ENCODE measurements at regions of chr2 and their contacts with region 1.

Region 1: GRCh38 chr2:19140596-19141219 is 217.7 kb downstream of the OSR1 start:
- DNase-seq: peak; percentile 55
- H3K4me3 ChIP-seq: no peak overlapping the region
- H3K27me3 ChIP-seq: no peaks in the 10 kb centered on the region
- CTCF ChIP-seq: no peak

Region 2: DNA sequence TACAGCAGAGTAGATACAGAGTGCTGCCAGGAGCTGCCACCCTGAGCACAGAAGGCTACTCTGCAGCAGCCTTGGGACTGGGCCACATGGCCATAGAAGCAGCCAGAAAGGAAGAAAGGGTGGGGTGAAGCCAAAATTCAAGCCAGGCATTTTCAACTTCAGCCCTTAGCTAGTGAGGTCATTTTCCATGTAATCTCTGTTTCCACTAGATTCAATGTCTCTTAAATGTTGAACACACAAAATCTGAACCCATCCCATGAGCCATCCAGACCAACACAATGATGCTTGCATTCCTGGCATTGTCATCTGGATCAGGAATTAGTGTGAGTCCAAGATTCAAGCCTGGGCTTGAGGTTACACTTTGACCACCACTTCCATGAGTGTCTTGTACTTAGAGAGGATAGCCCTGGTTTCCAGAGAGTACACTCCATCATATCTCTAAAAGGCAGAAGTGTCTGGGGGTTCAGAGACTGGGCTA is 25.9 kb before region 1 on chr2:
- CTCF ChIA-PET with region 1: no interaction called
- POLR2A ChIA-PET with region 1: no interaction called
- DNase-seq: no peak
- H3K4me3 ChIP-seq: no peak overlapping the region
- H3K27me3 ChIP-seq: no peaks in the 10 kb centered on the region
- CTCF ChIP-seq: no peak

Region 3: GRCh38 chr2:19158208-19158607 is 17.5 kb after region 1 on chr2:
- CTCF ChIA-PET with region 1: interaction called, 4 read pairs
- POLR2A ChIA-PET with region 1: interaction called, 14 read pairs
- DNase-seq: no peak
- H3K4me3 ChIP-seq: no peak overlapping the region
- H3K27me3 ChIP-seq: no peaks in the 10 kb centered on the region
- CTCF ChIP-seq: no peak

Region 4: DNA sequence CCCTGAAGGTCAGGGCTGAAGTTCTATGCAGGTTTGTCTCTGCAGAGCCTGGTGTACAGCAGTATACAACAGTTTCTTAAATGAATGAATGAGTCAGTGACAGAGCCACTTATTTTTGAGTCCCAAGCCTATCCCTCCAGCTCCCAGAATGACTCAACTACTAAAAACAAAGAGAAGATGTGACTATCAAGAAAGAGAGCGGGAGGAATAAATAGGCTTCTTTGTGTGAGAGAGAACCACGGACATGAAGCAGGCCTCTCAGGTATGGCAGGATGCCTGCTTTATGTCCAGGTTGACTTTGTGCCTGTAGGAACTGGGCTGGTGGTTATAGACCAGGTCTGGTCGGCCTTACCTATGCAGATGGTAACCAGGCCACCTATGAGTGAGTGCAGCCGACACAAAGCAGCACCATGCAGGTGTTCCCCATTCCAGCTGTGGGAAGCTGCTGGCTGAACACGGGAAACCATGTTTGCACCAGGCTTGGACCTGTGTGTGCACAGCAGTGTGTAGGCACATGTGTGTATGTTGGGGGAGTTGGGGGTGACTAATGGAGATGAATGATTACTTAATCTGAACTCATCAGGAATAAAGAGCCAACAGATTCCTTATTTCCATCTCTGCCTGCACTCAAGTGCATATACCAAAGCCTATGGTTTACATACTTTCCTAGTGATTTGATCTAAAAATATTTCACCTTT is 46.8 kb after region 1 on chr2:
- CTCF ChIA-PET with region 1: no interaction called
- POLR2A ChIA-PET with region 1: no interaction called
- DNase-seq: no peak
- H3K4me3 ChIP-seq: no peak overlapping the region
- H3K27me3 ChIP-seq: no peaks in the 10 kb centered on the region
- CTCF ChIP-seq: no peak

Measured in BJ (cell line).